Activated CD4-positive, alpha-beta T cell treated with anti-CD3 and anti-CD28 coated beads for 36 hours (primary cell): ENCODE measurements at regions of chr11 and their contacts with region 1.

Region 1: DNA sequence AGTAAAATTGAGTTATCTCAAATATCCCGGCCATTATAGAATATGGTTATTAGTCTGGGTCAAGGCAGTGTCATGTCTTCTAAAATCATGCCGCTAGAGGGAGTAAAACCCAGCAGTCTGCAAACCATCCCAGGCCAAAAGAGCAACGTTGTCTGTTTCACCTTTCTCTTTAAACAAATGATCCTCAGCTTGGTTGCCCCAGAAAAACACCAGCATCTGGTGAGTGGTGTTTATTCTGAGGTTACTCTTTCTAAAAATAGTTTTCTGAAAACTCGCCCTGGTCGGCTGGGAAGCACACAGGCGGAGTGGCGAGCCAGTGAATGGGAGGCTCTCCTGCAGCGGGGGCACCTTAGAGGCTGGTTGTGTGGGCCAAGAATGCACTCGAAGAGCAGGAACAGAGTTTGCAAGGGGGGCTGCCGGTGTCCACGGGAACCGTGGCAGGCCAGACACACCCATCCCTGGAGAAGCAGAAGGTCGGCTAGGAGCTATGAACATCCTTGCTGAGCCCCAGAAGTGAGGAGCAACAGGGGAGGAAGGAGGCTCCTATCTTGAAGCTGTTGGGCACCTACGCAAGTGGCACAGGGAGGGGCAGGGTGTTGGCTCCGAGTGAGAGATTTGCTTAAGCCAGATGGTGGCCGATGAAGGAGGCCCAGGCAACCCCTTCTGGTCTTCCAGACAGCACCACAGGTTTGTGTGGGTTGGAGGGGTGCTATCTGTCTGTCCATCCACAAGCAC is 297.1 kb downstream of the ETS1 start:
- DNase-seq: peak; percentile 80
- ATAC-seq: peak; percentile 54
- H3K4me3 Mint-ChIP-seq: peak overlapping the region; percentile 78
- H3K27ac Mint-ChIP-seq: peak overlapping the region; percentile 98
- H3K4me1 Mint-ChIP-seq: peaks cover 98% of the 10 kb centered on the region
- H3K27me3 Mint-ChIP-seq: no peaks in the 10 kb centered on the region

Region 2: DNA sequence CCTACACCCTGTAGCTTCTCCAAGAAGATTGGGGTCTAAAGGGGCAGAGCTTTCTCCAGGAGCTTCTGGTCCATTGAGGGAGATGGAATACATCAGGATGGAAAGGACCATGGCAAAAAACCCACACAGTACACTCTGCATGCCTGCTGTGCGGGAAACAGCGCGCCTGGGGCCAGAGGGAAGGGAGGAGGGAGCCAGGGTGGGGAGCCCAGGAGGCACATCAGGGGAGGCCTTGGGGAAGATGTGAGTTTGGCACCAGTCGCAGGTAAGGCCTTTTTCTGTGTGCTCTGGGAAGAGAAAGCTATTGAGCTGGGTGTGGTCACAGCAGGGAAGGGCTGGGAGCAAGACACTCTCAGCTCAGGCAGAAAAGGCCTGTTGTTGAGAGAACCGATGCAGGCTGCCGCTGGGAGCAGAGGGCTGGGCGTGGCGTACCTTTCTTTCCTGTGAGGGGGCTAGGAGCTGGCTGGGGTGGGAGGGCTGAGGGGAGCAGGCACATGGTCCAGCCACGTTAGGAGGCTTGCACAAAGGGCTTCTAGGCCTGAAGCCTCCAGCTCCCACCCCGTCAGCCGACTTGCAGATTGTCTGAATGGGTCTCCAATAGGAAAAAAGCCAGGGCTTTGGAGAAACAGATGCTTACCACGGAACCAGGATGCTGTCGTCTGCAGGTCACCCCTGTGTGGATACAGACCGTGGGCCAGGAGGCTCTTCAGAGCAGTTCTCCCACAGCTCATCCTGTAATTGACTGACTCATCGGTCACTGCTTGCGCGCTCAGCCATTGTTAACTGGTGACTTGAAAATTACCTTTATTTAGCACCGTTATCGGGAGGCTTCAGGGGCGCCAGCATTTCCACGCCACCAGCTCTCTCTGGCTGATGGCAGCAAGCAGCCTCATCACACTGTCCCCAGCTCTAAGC is 1697.5 kb before region 1 on chr11:
- CTCF ChIA-PET with region 1: no interaction called
- POLR2A ChIA-PET with region 1: no interaction called
- intact Hi-C with region 1: no loop called
- DNase-seq: no peak
- ATAC-seq: no peak
- H3K4me3 Mint-ChIP-seq: no peak overlapping the region
- H3K27ac Mint-ChIP-seq: no peak overlapping the region
- H3K4me1 Mint-ChIP-seq: no peaks in the 10 kb centered on the region
- H3K27me3 Mint-ChIP-seq: no peaks in the 10 kb centered on the region

Region 3: GRCh38 chr11:128058580-128059208 is 231.6 kb before region 1 on chr11:
- CTCF ChIA-PET with region 1: no interaction called
- POLR2A ChIA-PET with region 1: no interaction called
- intact Hi-C with region 1: no loop called
- DNase-seq: no peak
- ATAC-seq: peak; percentile 73
- H3K4me3 Mint-ChIP-seq: no peak overlapping the region
- H3K27ac Mint-ChIP-seq: no peak overlapping the region
- H3K4me1 Mint-ChIP-seq: peaks cover 23% of the 10 kb centered on the region
- H3K27me3 Mint-ChIP-seq: no peaks in the 10 kb centered on the region

Region 4: DNA sequence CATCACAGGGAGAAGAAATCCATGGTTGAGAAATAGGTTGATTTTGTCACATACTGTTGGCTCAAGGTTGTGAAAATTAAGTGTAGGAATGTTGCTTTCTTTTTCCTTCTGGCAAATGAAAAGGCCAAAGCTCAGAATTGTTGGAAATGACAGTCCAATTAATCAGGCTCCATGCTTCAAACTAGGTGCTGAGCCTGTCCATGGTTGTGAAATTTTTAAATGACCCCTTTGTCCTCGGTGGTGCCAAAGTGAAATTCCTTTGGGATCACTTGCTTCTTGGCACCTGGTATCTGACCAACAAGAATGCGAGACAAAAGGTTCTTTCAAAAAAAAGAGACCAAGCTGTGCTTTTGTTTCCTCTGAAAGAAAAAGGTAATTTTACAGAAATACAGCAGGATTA is 154.8 kb before region 1 on chr11:
- CTCF ChIA-PET with region 1: no interaction called
- POLR2A ChIA-PET with region 1: no interaction called
- intact Hi-C with region 1: no loop called
- DNase-seq: no peak
- ATAC-seq: no peak
- H3K4me3 Mint-ChIP-seq: no peak overlapping the region
- H3K27ac Mint-ChIP-seq: no peak overlapping the region
- H3K4me1 Mint-ChIP-seq: peaks cover 3% of the 10 kb centered on the region
- H3K27me3 Mint-ChIP-seq: no peaks in the 10 kb centered on the region

Region 5: GRCh38 chr11:128172046-128172878 is 118.0 kb before region 1 on chr11:
- CTCF ChIA-PET with region 1: interaction called, 21 read pairs
- POLR2A ChIA-PET with region 1: interaction called, 3 read pairs
- intact Hi-C with region 1: loop called (anchors 1 kb)
- DNase-seq: peak; percentile 94
- ATAC-seq: peak; percentile 84
- H3K4me3 Mint-ChIP-seq: no peak overlapping the region
- H3K27ac Mint-ChIP-seq: no peak overlapping the region
- H3K4me1 Mint-ChIP-seq: peaks cover 22% of the 10 kb centered on the region
- H3K27me3 Mint-ChIP-seq: peaks cover 5% of the 10 kb centered on the region

Region 6: DNA sequence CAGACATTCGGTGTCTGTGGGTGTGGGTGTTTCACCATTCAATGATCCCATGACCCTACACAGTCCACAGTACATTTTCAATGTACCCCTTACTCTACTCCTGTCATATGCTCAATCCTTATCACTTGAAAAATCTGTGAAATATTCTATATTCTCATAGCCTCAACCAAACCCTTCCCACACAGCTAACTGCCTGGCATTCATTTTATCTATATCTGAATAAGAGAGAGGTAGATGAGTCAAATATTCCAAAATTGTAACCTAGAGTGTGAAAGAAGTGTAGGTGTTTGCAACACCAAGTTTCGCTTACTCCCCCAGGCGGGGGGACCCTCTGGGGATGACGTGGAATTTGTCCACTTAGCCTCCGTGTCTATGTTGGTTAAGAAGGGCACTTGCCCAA is 57.7 kb before region 1 on chr11:
- CTCF ChIA-PET with region 1: interaction called, 6 read pairs
- POLR2A ChIA-PET with region 1: interaction called, 12 read pairs
- intact Hi-C with region 1: loop called (anchors 1 kb)
- DNase-seq: peak; percentile 81
- ATAC-seq: peak; percentile 63
- H3K4me3 Mint-ChIP-seq: no peak overlapping the region
- H3K27ac Mint-ChIP-seq: peak overlapping the region; percentile 92
- H3K4me1 Mint-ChIP-seq: peaks cover 60% of the 10 kb centered on the region
- H3K27me3 Mint-ChIP-seq: no peaks in the 10 kb centered on the region

Region 7: DNA sequence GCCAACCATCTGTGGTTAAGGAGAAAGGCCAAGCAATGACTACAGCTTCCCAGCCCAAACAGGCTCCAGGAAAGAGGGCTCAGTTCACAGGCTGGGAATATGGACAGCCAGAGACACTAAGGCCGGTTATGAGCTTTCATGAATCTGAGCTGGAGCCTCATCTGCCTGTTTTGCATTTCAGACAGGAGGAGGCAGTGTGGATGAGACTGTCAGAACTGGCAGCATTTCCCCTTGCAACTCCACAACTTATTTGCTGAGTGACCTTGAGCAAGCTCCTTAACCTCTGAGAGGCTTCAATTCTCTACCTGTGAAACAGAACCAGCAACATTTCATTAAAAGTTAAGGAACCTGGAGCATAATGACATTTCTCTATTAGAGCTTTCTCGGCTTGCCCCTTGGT is 33.1 kb after region 1 on chr11:
- CTCF ChIA-PET with region 1: interaction called, 42 read pairs
- POLR2A ChIA-PET with region 1: interaction called, 41 read pairs
- intact Hi-C with region 1: loop called (anchors 1 kb)
- DNase-seq: peak; percentile 67
- ATAC-seq: peak; percentile 8
- H3K4me3 Mint-ChIP-seq: peak overlapping the region; percentile 62
- H3K27ac Mint-ChIP-seq: peak overlapping the region; percentile 98
- H3K4me1 Mint-ChIP-seq: peaks cover 91% of the 10 kb centered on the region
- H3K27me3 Mint-ChIP-seq: no peaks in the 10 kb centered on the region

Region 8: GRCh38 chr11:128472128-128473089 is 182.1 kb after region 1 on chr11:
- CTCF ChIA-PET with region 1: interaction called, 34 read pairs
- POLR2A ChIA-PET with region 1: interaction called, 26 read pairs
- intact Hi-C with region 1: loop called (anchors 1 kb)
- DNase-seq: peak; percentile 83
- ATAC-seq: peak; percentile 67
- H3K4me3 Mint-ChIP-seq: peak overlapping the region; percentile 72
- H3K27ac Mint-ChIP-seq: peak overlapping the region; percentile 99
- H3K4me1 Mint-ChIP-seq: peaks cover 97% of the 10 kb centered on the region
- H3K27me3 Mint-ChIP-seq: no peaks in the 10 kb centered on the region

Region 9: DNA sequence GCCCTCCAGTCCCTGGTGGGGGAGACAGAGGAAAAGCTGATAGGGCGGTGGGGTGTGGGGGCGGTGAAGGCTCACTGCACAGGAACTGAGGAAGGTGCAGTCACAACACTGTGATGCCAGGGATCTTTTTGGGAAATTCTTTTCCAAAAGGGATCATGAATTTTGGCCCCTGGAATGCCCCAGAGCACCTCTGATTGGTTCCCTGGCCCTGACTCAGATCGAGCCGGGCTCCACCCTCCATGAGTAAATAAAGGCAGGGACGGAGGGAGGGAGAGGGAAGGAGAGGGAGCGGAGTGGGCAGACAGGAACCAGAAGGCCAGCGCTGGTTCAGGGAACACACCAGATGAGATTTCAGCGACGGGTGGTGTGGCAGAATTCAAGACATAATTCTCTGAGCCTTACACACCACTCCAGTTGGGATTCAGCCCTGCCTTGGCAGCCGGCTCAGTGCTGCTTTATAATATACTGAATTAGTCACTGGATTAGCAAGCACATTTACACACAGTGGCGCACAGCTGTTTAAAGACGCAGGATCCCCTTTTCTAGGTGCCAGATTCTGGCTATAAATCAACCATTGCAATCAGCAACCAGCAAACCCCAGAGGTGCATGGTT is 216.8 kb after region 1 on chr11:
- CTCF ChIA-PET with region 1: interaction called, 9 read pairs
- POLR2A ChIA-PET with region 1: interaction called, 4 read pairs
- intact Hi-C with region 1: loop called in 1 of 2 experiments (anchors 1 kb)
- DNase-seq: peak; percentile 80
- ATAC-seq: peak; percentile 58
- H3K4me3 Mint-ChIP-seq: peak overlapping the region; percentile 96
- H3K27ac Mint-ChIP-seq: peak overlapping the region; percentile 98
- H3K4me1 Mint-ChIP-seq: peaks cover 89% of the 10 kb centered on the region
- H3K27me3 Mint-ChIP-seq: no peaks in the 10 kb centered on the region

Region 10: GRCh38 chr11:128757235-128757711 is 467.0 kb after region 1 on chr11:
- CTCF ChIA-PET with region 1: interaction called, 3 read pairs
- POLR2A ChIA-PET with region 1: interaction called, 3 read pairs
- intact Hi-C with region 1: loop called in 1 of 2 experiments (anchors 1 kb)
- DNase-seq: peak; percentile 83
- ATAC-seq: peak; percentile 78
- H3K4me3 Mint-ChIP-seq: peak overlapping the region; percentile 32
- H3K27ac Mint-ChIP-seq: peak overlapping the region; percentile 95
- H3K4me1 Mint-ChIP-seq: peaks cover 79% of the 10 kb centered on the region
- H3K27me3 Mint-ChIP-seq: no peaks in the 10 kb centered on the region